Activated CD4-positive, alpha-beta T cell treated with anti-CD3 and anti-CD28 coated beads for 36 hours (primary cell): ENCODE measurements at regions of chr15 and their contacts with region 1.

Region 1: GRCh38 chr15:90291679-90292356 is 26.3 kb downstream of the NGRN start:
- DNase-seq: peak; percentile 45
- ATAC-seq: no peak
- H3K4me3 Mint-ChIP-seq: no peak overlapping the region
- H3K27ac Mint-ChIP-seq: no peak overlapping the region
- H3K4me1 Mint-ChIP-seq: no peaks in the 10 kb centered on the region
- H3K27me3 Mint-ChIP-seq: no peaks in the 10 kb centered on the region

Region 2: GRCh38 chr15:89837134-89837833 is 454.5 kb before region 1 on chr15:
- CTCF ChIA-PET with region 1: no interaction called
- POLR2A ChIA-PET with region 1: no interaction called
- intact Hi-C with region 1: no loop called
- DNase-seq: no peak
- ATAC-seq: no peak
- H3K4me3 Mint-ChIP-seq: no peak overlapping the region
- H3K27ac Mint-ChIP-seq: no peak overlapping the region
- H3K4me1 Mint-ChIP-seq: peaks cover 8% of the 10 kb centered on the region
- H3K27me3 Mint-ChIP-seq: no peaks in the 10 kb centered on the region

Region 3: DNA sequence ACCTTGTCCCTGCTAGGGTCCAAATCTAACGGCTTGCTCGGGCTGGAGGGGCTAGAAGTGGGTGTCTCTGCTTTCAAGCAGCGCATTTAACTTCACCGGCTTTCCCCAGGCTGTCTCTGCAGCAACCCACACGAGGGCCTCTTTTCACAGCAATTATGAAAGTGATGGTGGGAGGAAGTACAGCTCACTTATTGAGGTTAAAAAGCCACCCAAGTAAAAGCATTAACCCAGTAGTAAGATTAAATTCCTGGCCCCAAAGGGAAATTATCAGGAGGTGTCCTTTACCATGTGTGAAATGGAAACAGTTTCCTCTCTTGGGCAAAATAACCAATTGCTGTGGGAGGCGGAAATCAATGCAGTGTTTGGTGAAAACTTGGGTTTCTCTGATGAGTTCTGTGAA is 14.7 kb after region 1 on chr15:
- CTCF ChIA-PET with region 1: interaction called, 20 read pairs
- POLR2A ChIA-PET with region 1: no interaction called
- intact Hi-C with region 1: no loop called
- DNase-seq: peak; percentile 72
- ATAC-seq: peak; percentile 85
- H3K4me3 Mint-ChIP-seq: peak overlapping the region; percentile 32
- H3K27ac Mint-ChIP-seq: peak overlapping the region; percentile 66
- H3K4me1 Mint-ChIP-seq: peaks cover 45% of the 10 kb centered on the region
- H3K27me3 Mint-ChIP-seq: no peaks in the 10 kb centered on the region